Prostate gland (tissue), 2 donors: ENCODE measurements at regions of chr3 and their contacts with region 1.

Region 1: DNA sequence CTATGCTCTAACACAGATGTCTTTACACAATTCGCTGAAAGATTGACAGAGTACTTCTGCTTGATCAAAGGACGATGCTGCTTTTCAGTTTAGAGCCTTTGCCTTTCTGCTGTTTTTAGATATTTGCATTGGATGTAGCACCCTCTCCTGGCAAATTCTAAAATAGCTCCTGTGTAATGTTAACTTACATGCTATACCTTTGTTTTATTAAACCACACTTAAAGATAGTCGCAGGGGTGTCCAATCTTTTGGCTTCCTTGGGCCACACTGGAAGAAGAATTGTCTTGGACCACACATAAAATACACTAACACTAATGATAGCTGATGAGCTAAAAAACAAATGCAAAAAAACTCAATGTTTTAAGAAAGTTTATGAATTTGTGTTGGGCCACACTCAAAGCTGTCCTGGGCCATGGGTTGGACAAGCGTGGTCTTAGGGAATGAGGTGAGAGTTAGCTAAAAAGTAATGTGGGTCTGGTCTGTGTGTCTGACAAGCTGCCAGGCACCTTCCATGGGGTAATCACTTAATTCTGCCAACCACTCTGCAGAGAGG is 62.9 kb downstream of the ATG7 start:
- DNase-seq: peak; percentile 31
- H3K4me3 ChIP-seq: no peak overlapping the region
- H3K27ac ChIP-seq: no peak overlapping the region
- H3K4me1 ChIP-seq: no peaks in the 10 kb centered on the region
- H3K27me3 ChIP-seq: no peaks in the 10 kb centered on the region
- CTCF ChIP-seq: peak in 3 of 4 experiments; percentile 56 to 81 (median 81)
- POLR2A ChIP-seq: no peak

Region 2: DNA sequence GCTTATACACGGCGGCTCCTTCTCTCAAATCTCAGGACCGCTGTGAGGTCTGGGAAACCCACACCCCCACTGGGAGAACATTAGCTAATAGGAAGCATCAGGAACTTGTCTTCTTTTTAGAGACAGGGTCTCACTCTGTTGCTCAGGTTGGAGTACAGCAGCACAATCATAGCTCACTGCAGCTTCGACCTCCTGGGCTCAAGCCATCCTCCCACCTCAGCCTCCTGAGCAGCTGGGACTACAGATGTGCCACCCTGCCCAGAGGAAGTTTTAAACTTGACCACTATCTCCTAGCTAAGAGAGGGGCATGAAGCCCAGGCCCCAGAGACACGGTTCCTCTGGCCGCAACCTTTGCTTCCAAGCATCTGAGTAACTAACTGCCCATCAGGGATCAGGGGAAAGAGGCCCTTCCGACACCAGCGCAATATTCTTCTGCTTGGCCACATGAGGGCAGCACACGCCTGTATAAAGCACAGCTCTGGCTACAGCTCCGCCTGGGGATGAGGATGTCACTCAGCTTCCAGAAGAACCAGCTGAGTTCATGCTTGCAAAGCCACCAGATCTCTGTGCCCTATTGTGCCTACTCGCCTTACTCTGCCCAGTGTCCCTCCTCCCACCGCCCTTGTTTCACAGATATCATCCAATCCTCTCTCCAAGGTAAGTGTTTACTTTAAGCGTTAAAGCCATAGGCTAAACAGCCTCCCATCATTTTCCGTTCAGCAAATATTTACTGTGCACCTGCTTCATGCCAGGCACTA is 576.6 kb before region 1 on chr3:
- intact Hi-C with region 1: loop called (anchors 10 kb)
- DNase-seq: peak; percentile 41
- H3K4me3 ChIP-seq: no peak overlapping the region
- H3K27ac ChIP-seq: no peak overlapping the region
- H3K4me1 ChIP-seq: no peaks in the 10 kb centered on the region
- H3K27me3 ChIP-seq: peaks cover 4% of the 10 kb centered on the region
- CTCF ChIP-seq: peak; percentile 22 to 77 (median 72)
- POLR2A ChIP-seq: no peak

Region 3: GRCh38 chr3:11060500-11061251 is 274.5 kb before region 1 on chr3:
- intact Hi-C with region 1: loop called (anchors 5 kb)
- DNase-seq: peak; percentile 39
- H3K4me3 ChIP-seq: peak overlapping the region in 1 of 2 donors; percentile 8
- H3K27ac ChIP-seq: no peak overlapping the region
- H3K4me1 ChIP-seq: no peaks in the 10 kb centered on the region
- H3K27me3 ChIP-seq: peaks cover 11% of the 10 kb centered on the region
- CTCF ChIP-seq: peak; percentile 65 to 91 (median 79)
- POLR2A ChIP-seq: no peak

Region 4: GRCh38 chr3:11155341-11156025 is 179.6 kb before region 1 on chr3:
- intact Hi-C with region 1: loop called (anchors 5 kb)
- DNase-seq: peak; percentile 56
- H3K4me3 ChIP-seq: peak overlapping the region; percentile 33 to 35
- H3K27ac ChIP-seq: no peak overlapping the region
- H3K4me1 ChIP-seq: peaks cover 2% of the 10 kb centered on the region
- H3K27me3 ChIP-seq: peaks cover 7% of the 10 kb centered on the region
- CTCF ChIP-seq: peak; percentile 17 to 74 (median 50)
- POLR2A ChIP-seq: no peak

Region 5: GRCh38 chr3:11185564-11186317 is 149.4 kb before region 1 on chr3:
- intact Hi-C with region 1: no loop called
- DNase-seq: peak; percentile 91
- H3K4me3 ChIP-seq: no peak overlapping the region
- H3K27ac ChIP-seq: no peak overlapping the region
- H3K4me1 ChIP-seq: no peaks in the 10 kb centered on the region
- H3K27me3 ChIP-seq: no peaks in the 10 kb centered on the region
- CTCF ChIP-seq: peak in 1 of 4 experiments; percentile 16
- POLR2A ChIP-seq: no peak

Region 6: DNA sequence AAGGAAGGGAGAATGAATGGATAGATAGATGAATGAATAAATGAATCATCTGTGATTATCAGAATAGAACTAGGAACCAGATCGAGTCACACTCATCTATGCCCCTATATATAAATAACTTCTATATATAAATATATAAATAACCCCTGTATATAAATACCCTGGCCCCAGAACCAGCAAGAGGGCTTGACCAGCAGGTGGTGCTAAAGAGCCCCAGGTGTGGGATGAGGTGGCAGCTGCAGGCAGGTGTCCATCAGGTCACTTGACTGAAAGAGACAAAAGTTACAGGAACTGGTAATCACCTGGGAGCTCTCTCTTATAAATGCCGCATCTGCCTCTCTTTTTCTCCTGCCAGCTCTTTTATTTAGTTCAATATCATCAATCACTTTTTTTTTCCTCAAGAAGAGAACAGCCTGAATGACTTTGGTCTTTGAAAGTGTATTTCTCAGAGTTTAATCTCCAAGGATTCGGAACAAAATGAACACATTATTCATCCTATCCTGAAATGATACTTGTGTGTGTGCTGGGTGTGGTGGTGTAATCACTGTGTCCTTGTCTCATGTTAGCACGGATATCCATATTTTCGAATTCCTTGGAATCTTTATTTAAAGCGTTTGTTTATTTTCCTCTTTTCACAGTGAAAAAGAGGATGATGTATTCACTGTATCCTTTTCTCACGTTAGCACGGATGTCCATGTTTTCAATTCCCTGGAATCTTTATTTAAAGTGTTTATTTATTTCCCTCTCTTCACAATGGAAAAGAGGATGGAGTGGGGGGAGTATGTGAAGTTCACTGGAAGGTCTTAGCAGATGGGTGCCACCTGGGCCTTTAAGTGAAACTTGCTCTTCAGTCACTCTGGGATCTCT is 98.3 kb before region 1 on chr3:
- intact Hi-C with region 1: loop called (anchors 10 kb)
- DNase-seq: peak; percentile 63
- H3K4me3 ChIP-seq: no peak overlapping the region
- H3K27ac ChIP-seq: no peak overlapping the region
- H3K4me1 ChIP-seq: no peaks in the 10 kb centered on the region
- H3K27me3 ChIP-seq: no peaks in the 10 kb centered on the region
- CTCF ChIP-seq: peak; percentile 56 to 77 (median 70)
- POLR2A ChIP-seq: no peak

Region 7: DNA sequence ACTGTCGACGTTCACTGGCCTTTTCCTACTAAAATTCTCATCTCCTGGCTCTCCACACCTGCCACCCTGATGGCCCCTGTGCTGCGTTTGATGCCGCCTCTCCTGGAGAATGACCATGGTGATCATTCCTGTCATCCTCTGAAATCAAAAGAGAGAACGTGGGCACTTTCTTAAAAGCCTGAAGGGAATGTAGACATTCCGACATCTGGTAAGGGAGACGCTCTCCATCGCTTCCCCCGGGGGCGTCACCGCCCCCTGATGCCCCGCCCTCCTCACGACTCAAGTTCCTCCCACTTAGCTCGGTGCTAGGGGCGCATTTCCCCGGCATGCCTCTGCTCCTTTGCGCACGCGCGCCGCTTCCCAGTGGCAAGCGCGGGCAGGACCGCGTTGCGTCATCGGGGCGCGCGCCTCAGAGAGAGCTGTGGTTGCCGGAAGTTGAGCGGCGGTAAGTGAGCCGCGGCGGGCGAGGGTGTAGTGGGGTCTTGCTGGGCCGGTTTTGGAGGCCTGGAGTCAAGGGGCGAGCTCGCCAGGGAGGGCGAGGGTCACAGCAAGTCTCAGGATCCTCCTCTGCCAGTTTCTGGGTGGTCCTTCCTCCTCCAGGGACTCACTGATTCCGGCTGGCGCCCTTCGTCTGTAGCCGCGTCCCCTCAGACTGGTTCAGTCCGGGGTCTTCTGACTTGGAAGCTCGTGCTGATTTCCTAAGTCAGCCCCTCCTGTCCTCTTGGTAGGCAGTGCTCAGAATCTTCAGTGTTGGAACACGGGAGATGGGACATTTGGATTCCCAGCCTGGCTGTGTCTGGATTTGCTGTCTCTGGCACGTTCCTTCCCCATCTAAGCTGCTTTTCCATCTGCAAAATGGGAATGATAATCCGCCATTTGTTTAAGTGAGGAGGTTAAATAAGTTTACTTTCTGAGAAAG is 62.9 kb before region 1 on chr3 and contains the start of gene ATG7:
- intact Hi-C with region 1: no loop called
- DNase-seq: peak; percentile 92
- H3K4me3 ChIP-seq: peak within 1 kb of the TSS; percentile 70 to 85
- H3K27ac ChIP-seq: peak within 1 kb of the TSS; percentile 72 to 77
- H3K4me1 ChIP-seq: peaks cover 5% of the 10 kb centered on the region
- H3K27me3 ChIP-seq: no peaks in the 10 kb centered on the region
- CTCF ChIP-seq: peak in 2 of 4 experiments; percentile 41 to 47
- POLR2A ChIP-seq: peak; percentile 72
- total RNA-seq, gene ATG7: 25.2 to 66.5 TPM